Tibial artery (tissue), 4 donors: ENCODE measurements at regions of chr12 and their contacts with region 1.

Region 1: DNA sequence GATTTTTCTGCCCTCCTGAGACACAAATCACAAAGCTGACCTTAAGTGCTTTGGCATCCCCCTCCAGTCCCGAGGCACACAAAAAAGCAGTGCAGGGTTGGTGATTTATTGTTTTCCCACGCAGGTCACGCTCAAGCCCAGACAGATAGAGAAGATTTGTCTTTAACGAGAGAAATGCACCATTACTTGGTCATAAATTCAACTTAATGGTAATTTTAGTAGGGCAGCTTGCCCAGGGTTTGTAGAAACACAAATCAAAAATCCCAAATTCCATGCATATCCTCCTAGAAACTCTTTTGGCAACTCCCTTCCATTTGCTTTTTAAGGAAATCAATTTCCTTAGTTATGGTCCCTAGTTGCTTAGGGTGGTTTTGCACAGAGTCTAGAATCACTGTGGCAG is 132.6 kb downstream of the IGF1 start:
- DNase-seq: no peak
- H3K4me3 ChIP-seq: no peak overlapping the region
- H3K27ac ChIP-seq: no peak overlapping the region
- H3K4me1 ChIP-seq: peaks cover 0 to 9% (median 0%) of the 10 kb centered on the region in 4 donors
- H3K27me3 ChIP-seq: no peaks in the 10 kb centered on the region
- CTCF ChIP-seq: no peak

Region 2: DNA sequence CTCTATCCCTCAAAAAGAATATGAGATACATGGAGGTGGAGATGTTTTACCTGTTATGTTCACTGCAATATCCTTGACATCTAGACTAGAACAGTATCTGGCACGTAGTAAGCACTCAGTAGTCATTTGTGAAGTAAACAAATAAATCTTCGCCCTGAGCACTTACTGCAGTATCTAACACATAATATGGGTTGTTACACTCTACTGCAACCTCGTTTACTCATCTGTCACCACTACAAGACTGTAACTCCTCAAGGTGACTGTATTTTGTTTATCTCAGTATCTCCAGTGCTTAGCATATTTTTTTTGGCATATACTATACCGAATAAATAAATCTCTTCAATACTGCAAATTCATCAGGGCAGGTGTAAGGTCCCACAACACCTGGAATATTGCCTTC is 352.1 kb before region 1 on chr12:
- intact Hi-C with region 1: loop called (anchors 2 kb)
- DNase-seq: no peak
- H3K4me3 ChIP-seq: no peak overlapping the region
- H3K27ac ChIP-seq: no peak overlapping the region
- H3K4me1 ChIP-seq: no peaks in the 10 kb centered on the region
- H3K27me3 ChIP-seq: no peaks in the 10 kb centered on the region
- CTCF ChIP-seq: no peak